Activated CD4-positive, alpha-beta memory T cell treated with anti-CD3 and anti-CD28 coated beads for 36 hours (primary cell): ENCODE measurements at regions of chr20 and their contacts with region 1.

Region 1: GRCh38 chr20:58818585-58819285 is 32.0 kb downstream of the GNAS-AS1 start:
- DNase-seq: peak; percentile 91
- H3K4me3 Mint-ChIP-seq: no peak overlapping the region
- H3K27ac Mint-ChIP-seq: no peak overlapping the region
- H3K4me1 Mint-ChIP-seq: peaks cover 11% of the 10 kb centered on the region
- H3K27me3 Mint-ChIP-seq: peaks cover 21% of the 10 kb centered on the region

Region 2: GRCh38 chr20:58714340-58714860 is 104.3 kb before region 1 on chr20:
- CTCF ChIA-PET with region 1: no interaction called
- POLR2A ChIA-PET with region 1: no interaction called
- intact Hi-C with region 1: no loop called
- DNase-seq: peak; percentile 2
- H3K4me3 Mint-ChIP-seq: no peak overlapping the region
- H3K27ac Mint-ChIP-seq: no peak overlapping the region
- H3K4me1 Mint-ChIP-seq: no peaks in the 10 kb centered on the region
- H3K27me3 Mint-ChIP-seq: no peaks in the 10 kb centered on the region

Region 3: DNA sequence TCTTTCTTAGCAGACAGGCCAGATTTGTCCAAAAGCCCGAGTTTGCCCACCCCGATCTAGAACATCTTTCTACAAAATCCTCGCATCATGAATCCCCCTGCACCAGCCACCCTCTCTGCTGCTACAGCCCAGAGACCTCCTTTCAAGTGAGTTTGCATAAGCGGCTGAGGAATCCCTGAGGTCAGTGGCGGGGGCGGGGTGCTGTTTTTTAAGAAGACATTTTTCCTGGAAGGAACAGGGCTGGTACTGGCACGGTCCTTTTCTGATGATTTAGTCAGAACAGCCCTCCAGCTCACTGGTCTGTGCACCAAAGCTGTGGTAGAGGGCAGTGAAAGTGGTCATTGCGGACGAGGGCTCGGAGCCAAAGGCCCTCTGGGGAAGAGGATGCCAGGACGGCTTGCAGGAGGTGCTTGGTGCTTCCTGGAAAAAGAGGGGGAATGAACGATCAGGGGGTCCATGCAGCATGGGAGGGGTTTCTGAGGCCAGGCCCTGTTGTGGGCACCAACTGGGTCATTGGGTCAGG is 18.5 kb before region 1 on chr20:
- CTCF ChIA-PET with region 1: no interaction called
- POLR2A ChIA-PET with region 1: no interaction called
- intact Hi-C with region 1: no loop called
- DNase-seq: no peak
- H3K4me3 Mint-ChIP-seq: no peak overlapping the region
- H3K27ac Mint-ChIP-seq: no peak overlapping the region
- H3K4me1 Mint-ChIP-seq: no peaks in the 10 kb centered on the region
- H3K27me3 Mint-ChIP-seq: peaks cover 33% of the 10 kb centered on the region

Region 4: GRCh38 chr20:58850693-58851174 is 32.0 kb after region 1 on chr20 and contains the start of gene GNAS-AS1:
- CTCF ChIA-PET with region 1: no interaction called
- POLR2A ChIA-PET with region 1: no interaction called
- intact Hi-C with region 1: loop called (anchors 1 kb)
- DNase-seq: peak; percentile 90
- H3K4me3 Mint-ChIP-seq: peak within 1 kb of the TSS; percentile 86
- H3K27ac Mint-ChIP-seq: no peak within 1 kb of the TSS
- H3K4me1 Mint-ChIP-seq: peaks cover 28% of the 10 kb centered on the region
- H3K27me3 Mint-ChIP-seq: peaks cover 48% of the 10 kb centered on the region
- total RNA-seq, gene GNAS-AS1: 1.1 to 1.3 TPM

Region 5: GRCh38 chr20:58888521-58889333 is 70.0 kb after region 1 on chr20:
- CTCF ChIA-PET with region 1: no interaction called
- POLR2A ChIA-PET with region 1: no interaction called
- intact Hi-C with region 1: no loop called
- DNase-seq: peak; percentile 88
- H3K4me3 Mint-ChIP-seq: peak overlapping the region; percentile 80
- H3K27ac Mint-ChIP-seq: peak overlapping the region; percentile 58
- H3K4me1 Mint-ChIP-seq: peaks cover 27% of the 10 kb centered on the region
- H3K27me3 Mint-ChIP-seq: no peaks in the 10 kb centered on the region